ENCODE measurements at regions of chr11 and their contacts with region 1.

Region 1: GRCh38 chr11:44565211-44565952 is at the start of gene CD82:
- DNase-seq: peak; percentile 100
- ATAC-seq: peak; percentile 84
- H3K4me3 Mint-ChIP-seq: peak within 1 kb of the TSS; percentile 93
- H3K27ac Mint-ChIP-seq: peak within 1 kb of the TSS; percentile 92
- H3K4me1 Mint-ChIP-seq: peaks cover 54% of the 10 kb centered on the region
- H3K27me3 Mint-ChIP-seq: no peaks in the 10 kb centered on the region
- total RNA-seq, gene CD82: 239 to 272 TPM

Region 2: GRCh38 chr11:43868852-43869567 is 696.4 kb before region 1 on chr11:
- CTCF ChIA-PET with region 1: no interaction called
- POLR2A ChIA-PET with region 1: no interaction called
- intact Hi-C with region 1: loop called in 1 of 2 experiments (anchors 5 kb)
- DNase-seq: peak; percentile 58
- ATAC-seq: peak; percentile 97
- H3K4me3 Mint-ChIP-seq: peak overlapping the region; percentile 7
- H3K27ac Mint-ChIP-seq: peak overlapping the region; percentile 8
- H3K4me1 Mint-ChIP-seq: peaks cover 21% of the 10 kb centered on the region
- H3K27me3 Mint-ChIP-seq: peaks cover 45% of the 10 kb centered on the region

Region 3: GRCh38 chr11:44483919-44484610 is 81.3 kb before region 1 on chr11:
- CTCF ChIA-PET with region 1: no interaction called
- POLR2A ChIA-PET with region 1: no interaction called
- intact Hi-C with region 1: no loop called
- DNase-seq: peak; percentile 10
- ATAC-seq: no peak
- H3K4me3 Mint-ChIP-seq: no peak overlapping the region
- H3K27ac Mint-ChIP-seq: no peak overlapping the region
- H3K4me1 Mint-ChIP-seq: no peaks in the 10 kb centered on the region
- H3K27me3 Mint-ChIP-seq: peaks cover 2% of the 10 kb centered on the region

Region 4: GRCh38 chr11:44611687-44612434 is 46.5 kb after region 1 on chr11:
- CTCF ChIA-PET with region 1: interaction called, 36 read pairs
- POLR2A ChIA-PET with region 1: interaction called, 4 read pairs
- intact Hi-C with region 1: loop called (anchors 2 kb)
- DNase-seq: peak; percentile 77
- ATAC-seq: peak; percentile 69
- H3K4me3 Mint-ChIP-seq: no peak overlapping the region
- H3K27ac Mint-ChIP-seq: peak overlapping the region; percentile 60
- H3K4me1 Mint-ChIP-seq: peaks cover 88% of the 10 kb centered on the region
- H3K27me3 Mint-ChIP-seq: no peaks in the 10 kb centered on the region

Region 5: GRCh38 chr11:44823006-44823405 is 257.6 kb after region 1 on chr11:
- CTCF ChIA-PET with region 1: no interaction called
- POLR2A ChIA-PET with region 1: no interaction called
- intact Hi-C with region 1: no loop called
- DNase-seq: peak; percentile 25
- ATAC-seq: peak; percentile 53
- H3K4me3 Mint-ChIP-seq: no peak overlapping the region
- H3K27ac Mint-ChIP-seq: no peak overlapping the region
- H3K4me1 Mint-ChIP-seq: no peaks in the 10 kb centered on the region
- H3K27me3 Mint-ChIP-seq: no peaks in the 10 kb centered on the region

Region 6: DNA sequence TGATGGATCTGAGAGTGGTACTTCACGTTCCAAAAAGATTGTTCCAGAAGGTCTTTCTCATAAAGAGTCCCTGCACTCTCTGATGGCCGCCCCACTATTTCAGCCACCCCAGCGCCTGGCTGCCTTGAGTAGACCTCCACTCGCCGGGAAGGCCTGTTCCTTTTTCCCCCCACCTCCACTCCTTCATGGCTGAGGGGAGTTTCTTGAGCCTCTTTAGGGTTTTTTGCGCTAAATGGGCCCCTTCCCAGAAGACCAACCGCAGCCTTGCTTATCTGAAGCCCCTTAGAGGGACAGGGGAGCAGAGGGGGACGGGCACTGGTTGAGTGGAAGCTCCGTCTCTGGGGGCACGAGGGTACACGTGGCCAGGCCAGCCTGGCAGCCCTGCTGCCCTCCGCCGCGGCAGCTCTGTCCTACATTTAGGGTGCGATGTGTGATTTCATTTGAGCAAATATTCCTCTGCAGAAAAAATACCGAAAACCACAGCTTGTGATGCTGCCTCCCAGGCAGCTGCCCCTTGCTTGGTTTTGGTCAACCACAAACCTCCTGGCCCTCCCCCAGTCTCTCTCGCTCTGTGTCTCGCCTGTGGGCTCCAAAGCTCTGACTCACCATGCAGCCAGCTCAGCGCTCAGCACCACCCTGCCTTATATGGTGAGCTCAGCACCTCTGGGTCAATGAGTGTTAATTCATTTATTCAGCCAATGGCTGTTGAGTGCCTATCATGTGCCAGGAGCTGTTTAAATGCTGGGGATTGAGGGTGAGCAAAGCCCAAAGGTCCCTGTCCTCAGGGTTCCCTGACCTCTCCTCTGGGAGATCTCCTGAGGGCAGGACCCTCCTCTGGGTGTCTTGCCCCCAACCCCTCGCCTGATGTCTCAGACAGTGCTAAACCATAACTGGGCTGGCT is 296.7 kb after region 1 on chr11:
- CTCF ChIA-PET with region 1: no interaction called
- POLR2A ChIA-PET with region 1: no interaction called
- intact Hi-C with region 1: loop called in 1 of 2 experiments (anchors 5 kb)
- DNase-seq: peak; percentile 93
- ATAC-seq: peak; percentile 100
- H3K4me3 Mint-ChIP-seq: no peak overlapping the region
- H3K27ac Mint-ChIP-seq: no peak overlapping the region
- H3K4me1 Mint-ChIP-seq: peaks cover 24% of the 10 kb centered on the region
- H3K27me3 Mint-ChIP-seq: peaks cover 38% of the 10 kb centered on the region

Region 7: DNA sequence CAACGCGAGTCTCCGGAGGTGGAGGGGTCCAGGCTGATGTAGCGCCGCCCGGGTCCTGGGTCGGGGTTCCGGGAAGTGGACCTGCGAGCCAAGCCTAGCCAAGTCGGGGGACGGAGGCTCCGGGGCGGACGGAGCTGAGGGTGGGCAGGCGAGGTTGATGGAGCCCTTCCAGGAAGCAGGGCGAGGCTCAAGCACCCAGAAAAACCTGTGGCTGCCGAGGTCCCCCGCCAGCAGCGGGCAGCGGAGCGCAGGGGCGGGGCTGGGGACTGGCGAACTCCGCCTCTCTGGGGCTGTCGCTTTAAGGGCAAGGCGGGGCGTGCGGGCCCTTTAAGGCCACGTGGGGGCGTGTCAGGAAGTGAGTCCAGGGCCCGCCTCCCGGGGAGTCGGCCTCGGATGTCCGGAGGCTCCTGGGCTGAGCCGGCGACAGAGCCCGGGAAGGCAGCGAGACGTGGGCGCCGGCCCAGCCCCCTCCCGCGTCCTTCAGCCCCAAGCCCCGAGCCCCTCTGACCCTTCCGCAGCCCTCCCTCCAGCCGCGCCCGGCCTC is 1239.5 kb after region 1 on chr11 and contains the start of gene SLC35C1:
- CTCF ChIA-PET with region 1: no interaction called
- POLR2A ChIA-PET with region 1: no interaction called
- intact Hi-C with region 1: loop called in 1 of 2 experiments (anchors 2 kb)
- DNase-seq: peak; percentile 98
- ATAC-seq: peak; percentile 97
- H3K4me3 Mint-ChIP-seq: peak within 1 kb of the TSS; percentile 91
- H3K27ac Mint-ChIP-seq: peak within 1 kb of the TSS; percentile 86
- H3K4me1 Mint-ChIP-seq: peaks cover 42% of the 10 kb centered on the region
- H3K27me3 Mint-ChIP-seq: no peaks in the 10 kb centered on the region
- total RNA-seq, gene SLC35C1: 9.6 to 9.8 TPM

Measured in activated CD4-positive, alpha-beta T cell treated with anti-CD3 and anti-CD28 coated beads for 36 hours (primary cell).